Activated CD8-positive, alpha-beta T cell treated with anti-CD3 and anti-CD28 coated beads for 36 hours (primary cell): ENCODE measurements at regions of chr7 and their contacts with region 1.

Region 1: GRCh38 chr7:108497082-108497725 is 28.7 kb downstream of the PNPLA8 start:
- DNase-seq: peak; percentile 69
- ATAC-seq: peak; percentile 75
- H3K4me3 Mint-ChIP-seq: no peak overlapping the region
- H3K27ac Mint-ChIP-seq: no peak overlapping the region
- H3K4me1 Mint-ChIP-seq: no peaks in the 10 kb centered on the region
- H3K27me3 Mint-ChIP-seq: no peaks in the 10 kb centered on the region
- CTCF ChIP-seq: peak; percentile 85

Region 2: DNA sequence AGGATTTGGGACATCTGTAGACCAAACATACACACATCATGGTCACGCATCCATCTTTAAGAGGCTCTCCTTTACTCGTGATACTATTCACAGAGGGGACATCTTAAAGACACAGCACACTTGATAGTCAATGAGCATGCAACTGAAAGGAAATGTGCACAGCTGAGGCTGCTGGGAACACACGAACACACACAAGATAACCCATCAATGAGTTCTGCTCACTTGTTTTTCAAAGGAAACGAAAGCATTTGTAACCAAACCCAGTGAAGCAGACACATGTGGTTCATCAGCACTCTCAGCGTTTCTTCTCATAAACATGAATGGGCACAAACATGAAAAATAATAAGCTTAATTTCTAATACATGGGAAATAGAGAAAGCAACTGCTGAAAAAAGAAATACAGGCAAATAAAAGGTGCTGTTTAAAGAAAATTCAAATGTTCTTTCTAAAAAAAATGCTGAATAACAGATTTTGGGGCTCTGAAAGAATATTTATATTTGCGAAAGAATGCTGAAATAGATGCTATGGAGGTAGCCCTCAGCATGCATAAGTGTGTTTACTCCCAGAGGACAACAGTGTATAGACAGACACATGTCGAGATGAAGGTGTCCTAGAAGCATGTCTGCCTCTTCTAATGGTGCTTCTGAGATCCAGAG is 307.3 kb before region 1 on chr7:
- CTCF ChIA-PET with region 1: interaction called, 12 read pairs
- POLR2A ChIA-PET with region 1: no interaction called
- intact Hi-C with region 1: no loop called
- DNase-seq: no peak
- ATAC-seq: peak; percentile 60
- H3K4me3 Mint-ChIP-seq: no peak overlapping the region
- H3K27ac Mint-ChIP-seq: peak overlapping the region; percentile 64
- H3K4me1 Mint-ChIP-seq: peaks cover 13% of the 10 kb centered on the region
- H3K27me3 Mint-ChIP-seq: no peaks in the 10 kb centered on the region
- CTCF ChIP-seq: no peak

Region 3: DNA sequence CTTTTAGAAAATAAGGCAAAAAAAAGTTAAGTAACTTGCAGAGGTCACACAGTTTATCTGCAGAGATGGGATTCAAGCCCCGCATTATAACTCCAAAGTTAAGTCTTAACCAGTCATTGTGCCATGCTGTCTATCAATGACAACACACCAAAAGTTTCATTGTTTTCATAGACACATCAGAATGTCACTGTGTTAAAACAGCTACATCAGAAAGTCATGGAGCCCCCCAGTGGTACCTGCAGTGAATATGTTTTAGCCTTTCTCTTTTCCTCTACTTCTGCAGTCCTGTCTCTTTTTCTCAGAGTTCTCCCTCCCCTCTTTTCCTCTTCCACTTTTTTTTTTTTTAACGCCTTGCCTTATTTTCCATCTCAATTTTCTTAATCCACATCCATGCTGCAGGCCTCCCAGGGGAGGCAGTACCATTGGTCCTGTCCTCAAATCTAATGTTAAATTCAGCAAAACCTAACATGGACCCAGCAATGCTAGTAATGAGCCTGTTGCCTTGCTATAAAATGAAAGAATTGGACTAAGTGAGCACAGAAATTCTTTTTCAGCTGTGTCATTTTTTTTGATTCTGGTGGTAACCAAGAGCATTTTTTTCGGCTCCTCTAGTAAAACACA is 37.2 kb before region 1 on chr7:
- CTCF ChIA-PET with region 1: interaction called, 14 read pairs
- POLR2A ChIA-PET with region 1: no interaction called
- intact Hi-C with region 1: no loop called
- DNase-seq: peak; percentile 66
- ATAC-seq: peak; percentile 32
- H3K4me3 Mint-ChIP-seq: no peak overlapping the region
- H3K27ac Mint-ChIP-seq: no peak overlapping the region
- H3K4me1 Mint-ChIP-seq: peaks cover 40% of the 10 kb centered on the region
- H3K27me3 Mint-ChIP-seq: peaks cover 18% of the 10 kb centered on the region
- CTCF ChIP-seq: peak; percentile 58

Region 4: DNA sequence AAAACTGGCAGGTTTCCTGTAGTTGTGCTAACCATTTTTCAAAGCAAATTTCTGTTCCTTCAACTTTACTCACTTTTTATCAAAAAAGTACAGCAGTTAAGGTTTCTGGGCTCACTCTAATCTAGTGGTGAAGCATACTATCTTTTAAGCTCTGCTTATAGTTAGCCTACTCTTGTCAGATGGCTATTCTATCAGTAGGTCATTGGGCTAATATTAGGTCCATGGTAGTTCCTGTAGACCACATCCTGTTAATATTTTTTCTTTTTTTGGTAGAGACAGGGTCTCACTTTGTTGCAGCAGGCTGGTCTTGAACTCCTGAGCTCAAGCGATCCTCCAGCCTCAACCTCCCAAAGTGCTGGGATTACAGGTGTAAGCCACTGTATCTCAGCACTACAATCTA is 13.1 kb before region 1 on chr7:
- CTCF ChIA-PET with region 1: interaction called, 18 read pairs
- POLR2A ChIA-PET with region 1: no interaction called
- intact Hi-C with region 1: no loop called
- DNase-seq: no peak
- ATAC-seq: no peak
- H3K4me3 Mint-ChIP-seq: no peak overlapping the region
- H3K27ac Mint-ChIP-seq: no peak overlapping the region
- H3K4me1 Mint-ChIP-seq: no peaks in the 10 kb centered on the region
- H3K27me3 Mint-ChIP-seq: no peaks in the 10 kb centered on the region
- CTCF ChIP-seq: no peak

Region 5: DNA sequence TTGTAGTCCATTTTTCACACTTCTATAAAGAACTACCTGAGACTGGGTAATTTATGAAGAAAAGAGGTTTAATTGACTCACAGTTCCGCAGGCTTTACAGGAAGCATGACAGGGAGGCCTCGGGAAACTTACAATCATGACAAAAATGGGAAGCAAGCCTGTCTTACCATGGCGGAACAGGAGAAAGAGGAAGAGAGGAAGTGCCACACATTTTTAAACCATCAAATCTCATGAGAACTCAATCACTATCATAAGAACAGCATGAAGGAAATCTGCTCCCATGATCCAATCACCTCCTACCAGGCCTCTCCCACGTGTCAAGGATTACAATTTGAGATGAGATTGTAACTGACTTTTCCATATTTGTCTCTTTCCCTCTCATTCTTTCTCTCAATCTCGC is 38.1 kb after region 1 on chr7:
- CTCF ChIA-PET with region 1: no interaction called
- POLR2A ChIA-PET with region 1: no interaction called
- intact Hi-C with region 1: no loop called
- DNase-seq: no peak
- ATAC-seq: no peak
- H3K4me3 Mint-ChIP-seq: no peak overlapping the region
- H3K27ac Mint-ChIP-seq: no peak overlapping the region
- H3K4me1 Mint-ChIP-seq: no peaks in the 10 kb centered on the region
- H3K27me3 Mint-ChIP-seq: peaks cover 6% of the 10 kb centered on the region
- CTCF ChIP-seq: no peak

Region 6: GRCh38 chr7:108561047-108561619 is 63.9 kb after region 1 on chr7:
- CTCF ChIA-PET with region 1: no interaction called
- POLR2A ChIA-PET with region 1: no interaction called
- intact Hi-C with region 1: no loop called
- DNase-seq: no peak
- ATAC-seq: no peak
- H3K4me3 Mint-ChIP-seq: no peak overlapping the region
- H3K27ac Mint-ChIP-seq: no peak overlapping the region
- H3K4me1 Mint-ChIP-seq: peaks cover 4% of the 10 kb centered on the region
- H3K27me3 Mint-ChIP-seq: no peaks in the 10 kb centered on the region
- CTCF ChIP-seq: no peak

Region 7: GRCh38 chr7:108650467-108650866 is 153.3 kb after region 1 on chr7:
- CTCF ChIA-PET with region 1: no interaction called
- POLR2A ChIA-PET with region 1: no interaction called
- intact Hi-C with region 1: no loop called
- DNase-seq: no peak
- ATAC-seq: no peak
- H3K4me3 Mint-ChIP-seq: no peak overlapping the region
- H3K27ac Mint-ChIP-seq: no peak overlapping the region
- H3K4me1 Mint-ChIP-seq: no peaks in the 10 kb centered on the region
- H3K27me3 Mint-ChIP-seq: peaks cover 3% of the 10 kb centered on the region
- CTCF ChIP-seq: no peak

Region 8: DNA sequence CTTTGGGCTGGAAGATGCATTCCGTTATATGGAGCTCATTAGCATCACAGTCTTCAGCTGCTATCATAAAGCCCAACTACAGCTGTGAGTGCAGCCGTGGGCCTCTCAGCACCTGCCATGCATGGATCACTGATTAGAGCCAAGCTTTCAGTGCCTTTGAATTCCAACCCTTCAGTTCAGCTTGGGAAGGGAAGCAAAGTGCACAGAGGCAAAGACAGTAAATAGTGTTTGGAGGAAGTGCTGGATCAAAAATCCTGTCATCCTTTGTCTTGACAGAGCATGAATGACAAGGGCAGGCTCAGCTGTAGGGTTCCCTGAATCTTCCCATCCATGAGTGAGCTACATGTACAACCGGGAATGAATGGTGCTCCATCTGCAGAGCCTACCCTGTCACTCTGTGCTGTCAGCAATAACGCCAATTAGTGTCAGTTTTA is 226.2 kb after region 1 on chr7:
- CTCF ChIA-PET with region 1: no interaction called
- POLR2A ChIA-PET with region 1: no interaction called
- intact Hi-C with region 1: no loop called
- DNase-seq: no peak
- ATAC-seq: no peak
- H3K4me3 Mint-ChIP-seq: no peak overlapping the region
- H3K27ac Mint-ChIP-seq: no peak overlapping the region
- H3K4me1 Mint-ChIP-seq: no peaks in the 10 kb centered on the region
- H3K27me3 Mint-ChIP-seq: no peaks in the 10 kb centered on the region
- CTCF ChIP-seq: no peak